Cardiac septum (tissue), 1 donor: ENCODE measurements at regions of chr3 and their contacts with region 1.

Region 1: GRCh38 chr3:134650431-134651346 is at the start of gene KY:
- DNase-seq: peak; percentile 87
- total RNA-seq, gene KY: 3.9 TPM

Region 2: DNA sequence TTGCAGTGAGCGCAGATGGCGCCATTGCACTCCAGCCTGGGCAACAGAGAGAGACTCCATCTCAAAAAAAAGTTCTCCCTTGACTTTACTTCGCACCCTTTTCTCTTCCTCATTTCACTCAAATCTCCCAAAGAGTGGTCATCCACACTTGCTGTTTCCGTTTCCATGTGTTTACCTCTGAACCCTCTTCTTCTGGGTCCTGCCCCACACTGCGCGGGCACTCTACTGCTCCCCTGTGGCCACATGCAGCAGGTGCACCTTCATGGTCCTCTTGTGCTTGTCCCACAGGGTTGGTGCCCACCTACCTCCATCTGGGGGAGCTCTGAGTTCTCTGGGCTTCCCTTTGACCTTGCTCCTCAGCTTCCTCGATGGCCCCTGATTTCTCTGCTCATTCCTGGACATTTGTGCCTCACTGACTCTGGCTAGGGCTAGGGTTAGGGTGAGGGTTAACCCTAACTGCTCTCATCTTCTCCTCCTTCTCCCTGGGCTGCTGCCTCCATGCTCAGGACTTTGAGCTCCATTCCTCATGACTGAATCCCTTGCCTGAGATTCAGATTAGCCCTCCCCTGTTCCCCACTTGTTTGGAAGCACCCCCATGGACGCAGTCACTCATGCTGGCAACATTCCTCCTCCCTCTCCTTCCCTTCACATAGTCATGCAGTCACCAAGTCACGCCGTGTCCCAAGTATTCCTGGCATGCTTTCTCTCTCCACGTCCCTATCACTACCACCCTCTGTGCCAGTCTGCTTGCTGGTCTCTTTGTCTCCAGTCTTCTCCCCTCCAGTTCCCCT is 26.7 kb after region 1 on chr3:
- intact Hi-C with region 1: loop called (anchors 2 kb)
- DNase-seq: no peak

Region 3: DNA sequence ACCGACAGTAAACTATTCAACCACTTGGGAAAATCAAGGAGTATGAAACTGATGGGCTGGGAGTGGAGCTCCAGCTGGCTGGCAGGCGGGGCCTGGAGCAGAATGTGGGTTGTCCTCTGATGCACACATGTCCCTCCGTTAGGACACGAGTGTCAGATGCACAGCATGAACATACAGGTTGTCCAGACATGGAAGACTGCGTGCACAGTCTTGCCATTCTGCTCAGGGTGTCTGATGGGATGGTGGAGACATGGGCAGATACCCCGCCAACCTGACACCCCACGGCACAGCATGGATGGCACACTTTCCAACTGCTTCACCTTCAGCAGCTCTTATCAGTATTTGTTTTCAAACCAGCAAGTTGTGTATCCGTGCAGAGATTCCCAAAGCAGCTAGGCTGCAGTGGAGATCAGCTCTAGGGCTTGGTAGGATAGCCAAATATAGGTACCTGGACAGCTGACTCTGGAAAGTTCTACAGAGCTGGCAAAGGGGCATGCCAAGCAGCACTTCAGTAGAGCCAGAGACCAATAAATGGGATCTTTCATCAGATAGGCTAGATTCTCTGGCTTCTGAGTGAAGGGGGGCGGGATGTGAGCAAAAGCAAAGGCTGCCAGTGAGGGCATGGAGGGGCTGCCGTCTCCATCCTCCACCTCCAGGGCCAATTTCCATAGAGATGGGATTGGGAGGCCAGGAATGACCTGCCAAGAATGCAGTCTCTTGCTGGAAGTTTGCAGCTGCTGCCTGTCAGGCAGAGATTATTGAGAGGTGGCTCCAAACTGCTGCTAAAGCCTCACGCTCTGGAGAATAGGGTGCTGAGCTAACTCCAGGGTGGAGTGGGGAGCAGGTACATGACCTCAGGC is 47.4 kb after region 1 on chr3:
- intact Hi-C with region 1: loop called (anchors 5 kb)
- DNase-seq: no peak

Region 4: DNA sequence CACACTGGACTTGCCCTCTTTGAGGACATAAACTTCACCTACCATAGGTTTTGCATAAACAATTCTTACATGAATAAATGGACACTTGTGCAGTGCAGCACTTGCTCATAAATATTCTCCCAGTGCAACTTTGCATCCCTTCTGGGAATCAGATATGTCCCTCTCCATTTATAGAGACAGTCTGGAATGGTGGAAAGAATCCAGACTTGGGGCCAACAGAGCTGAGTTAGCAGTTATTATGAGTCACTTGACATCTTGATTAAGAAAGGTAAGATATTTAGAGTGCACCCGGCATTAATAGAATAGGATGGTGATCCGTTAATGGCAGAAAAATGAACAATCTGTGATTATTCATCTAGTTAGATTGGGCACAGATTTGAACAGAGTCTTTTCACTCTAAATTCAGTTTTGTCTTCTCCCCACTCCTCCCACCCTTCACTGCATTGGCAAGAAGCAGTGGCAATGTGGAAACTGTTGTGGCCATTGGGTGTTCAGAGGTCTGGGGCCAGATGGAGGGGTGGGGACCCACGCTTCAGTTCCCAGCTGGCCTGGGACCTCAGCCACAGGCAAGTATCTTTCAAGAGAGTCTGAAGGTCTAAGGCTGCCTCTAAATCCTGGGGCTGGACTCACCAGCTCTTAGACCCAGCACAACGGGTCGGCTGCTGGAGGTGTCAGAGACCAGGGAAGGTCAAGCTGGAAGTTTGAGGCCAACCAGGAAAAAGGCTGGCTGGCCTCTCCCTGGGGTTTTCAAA is 59.0 kb after region 1 on chr3:
- intact Hi-C with region 1: no loop called
- DNase-seq: no peak

Region 5: GRCh38 chr3:134754768-134755559 is 104.3 kb after region 1 on chr3:
- intact Hi-C with region 1: loop called (anchors 2 kb)
- DNase-seq: no peak